Activated CD4-positive, alpha-beta T cell treated with anti-CD3 and anti-CD28 coated beads, Interleukin-2, amount 10 ng/mL, durations not matched to agents 24 days and 14 days (primary cell): ENCODE measurements at regions of chr22 and their contacts with region 1.

Region 1: GRCh38 chr22:50474668-50475492 is at the start of gene SBF1:
- DNase-seq: peak; percentile 98
- H3K4me3 Mint-ChIP-seq: peak within 1 kb of the TSS; percentile 95
- H3K27ac Mint-ChIP-seq: peak within 1 kb of the TSS; percentile 93
- H3K4me1 Mint-ChIP-seq: peaks cover 39% of the 10 kb centered on the region
- H3K27me3 Mint-ChIP-seq: peaks cover 11% of the 10 kb centered on the region
- total RNA-seq, gene SBF1: 108 and 115 TPM in 2 replicates

Region 2: GRCh38 chr22:50498322-50498890 is 23.5 kb after region 1 on chr22:
- intact Hi-C with region 1: loop called (anchors 2 kb)
- DNase-seq: peak; percentile 93
- H3K4me3 Mint-ChIP-seq: no peak overlapping the region
- H3K27ac Mint-ChIP-seq: no peak overlapping the region
- H3K4me1 Mint-ChIP-seq: peaks cover 6% of the 10 kb centered on the region
- H3K27me3 Mint-ChIP-seq: peaks cover 5% of the 10 kb centered on the region